Posterior vena cava (tissue), 2 donors: ENCODE measurements at regions of chr5 and their contacts with region 1.

Region 1: DNA sequence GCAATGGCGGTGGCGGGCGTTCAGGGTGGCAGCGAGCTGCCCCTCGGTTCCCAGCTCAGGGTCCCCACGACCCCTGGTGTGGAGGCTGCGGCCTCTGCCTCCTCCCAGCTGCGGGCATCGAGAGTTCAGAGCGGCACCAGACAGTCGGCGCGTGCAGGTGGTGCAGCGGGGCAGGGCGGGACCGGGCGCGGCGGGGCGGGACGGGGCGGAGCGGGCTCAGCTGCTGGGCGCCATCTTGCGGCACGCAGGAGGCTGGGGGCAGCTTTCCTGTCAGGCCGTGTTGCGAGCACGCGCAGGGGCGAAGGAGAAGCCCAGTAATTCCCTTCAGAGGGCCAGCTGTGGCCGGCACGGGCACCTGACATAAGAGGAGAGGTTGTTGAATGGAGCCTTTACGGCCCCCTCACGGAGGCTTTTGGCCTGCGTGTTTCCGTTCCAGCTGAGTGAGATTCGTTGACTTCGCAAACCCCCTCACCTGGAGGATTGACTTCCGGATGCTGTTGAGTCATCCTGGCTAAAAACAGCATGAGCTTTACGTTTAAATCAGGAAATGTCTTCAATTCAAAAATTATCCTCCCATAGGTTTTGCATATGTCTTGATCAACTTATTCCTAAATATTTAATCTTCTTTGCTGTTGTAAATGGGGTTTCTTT is 587 bp downstream of the C5orf47 start:
- DNase-seq: no peak

Region 2: GRCh38 chr5:173623296-173623771 is 366.2 kb before region 1 on chr5:
- intact Hi-C with region 1: loop called in 1 of 2 experiments (anchors 5 kb)
- DNase-seq: no peak

Region 3: DNA sequence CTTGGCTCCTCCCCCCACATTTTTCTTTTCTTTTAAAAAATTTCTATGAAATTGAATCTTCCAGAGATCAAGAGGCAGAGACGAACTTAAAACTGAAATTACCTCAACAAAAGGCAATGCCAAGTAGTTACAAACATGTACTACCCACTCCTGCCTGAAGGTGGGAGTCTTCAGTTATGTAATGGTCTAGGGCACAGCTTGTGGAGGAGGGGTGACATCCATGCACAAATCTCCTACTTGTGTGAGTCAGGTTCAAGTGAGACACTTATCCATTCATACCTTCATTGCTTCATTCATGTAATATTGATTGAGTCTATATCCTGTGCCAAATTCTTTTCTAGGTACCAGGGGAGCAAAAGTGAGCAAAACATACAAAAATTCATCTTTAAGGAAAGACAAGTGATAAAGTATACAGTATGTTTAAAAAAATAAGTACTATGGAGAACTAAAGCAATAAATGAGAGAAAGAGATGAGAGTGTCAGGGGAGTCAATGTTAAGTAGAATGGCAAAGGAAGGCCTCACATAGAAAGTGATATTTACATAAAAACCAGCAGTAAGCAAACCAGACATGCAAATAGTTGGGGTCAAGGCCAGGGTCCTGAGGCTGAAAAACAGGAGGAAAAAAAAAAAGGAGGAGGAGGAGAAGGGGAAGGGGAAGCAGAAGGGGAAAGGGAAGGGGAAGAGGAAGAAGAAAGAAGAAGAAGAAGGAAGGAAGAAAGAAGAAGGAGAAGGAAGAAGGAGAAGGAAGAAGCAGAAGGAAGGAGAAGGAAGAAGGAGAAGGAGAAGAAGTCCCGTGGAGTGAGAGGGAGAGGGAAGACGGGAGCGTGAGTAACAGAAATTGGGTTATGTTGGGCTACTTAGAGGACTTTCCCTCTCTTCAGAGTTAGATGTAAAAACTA is 31.1 kb after region 1 on chr5:
- intact Hi-C with region 1: no loop called
- DNase-seq: no peak